ENCODE measurements at regions of chr9 and their contacts with region 1.

Region 1: DNA sequence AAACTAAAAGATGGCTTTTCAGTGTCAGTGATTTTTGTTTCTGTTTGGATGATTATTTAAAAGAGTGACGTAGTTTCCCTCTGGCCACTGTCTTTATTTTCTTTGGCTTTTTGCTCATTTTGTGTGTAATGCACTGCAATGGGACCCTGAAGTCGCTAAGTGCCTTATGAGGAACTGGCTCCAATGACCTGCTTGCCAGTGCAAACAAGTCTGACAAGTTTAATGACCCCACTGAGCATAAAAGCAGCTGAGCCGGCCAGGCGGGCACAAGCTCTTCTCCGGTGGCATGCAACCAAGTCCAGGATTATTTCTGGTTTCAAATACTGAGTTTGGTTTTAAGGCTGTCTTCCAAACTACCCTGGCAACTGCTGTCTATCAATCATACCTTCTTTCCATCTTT is 15.6 kb upstream of the GNA14 start:
- DNase-seq: peak; percentile 50
- H3K4me3 ChIP-seq: no peak overlapping the region
- H3K27ac ChIP-seq: no peak overlapping the region
- H3K4me1 ChIP-seq: peaks cover 4% of the 10 kb centered on the region
- H3K27me3 ChIP-seq: no peaks in the 10 kb centered on the region
- CTCF ChIP-seq: no peak

Region 2: GRCh38 chr9:76018235-76018634 is 1645.5 kb before region 1 on chr9:
- intact Hi-C with region 1: no loop called
- DNase-seq: peak; percentile 36
- H3K4me3 ChIP-seq: no peak overlapping the region
- H3K27ac ChIP-seq: no peak overlapping the region
- H3K4me1 ChIP-seq: no peaks in the 10 kb centered on the region
- H3K27me3 ChIP-seq: no peaks in the 10 kb centered on the region
- CTCF ChIP-seq: no peak

Region 3: DNA sequence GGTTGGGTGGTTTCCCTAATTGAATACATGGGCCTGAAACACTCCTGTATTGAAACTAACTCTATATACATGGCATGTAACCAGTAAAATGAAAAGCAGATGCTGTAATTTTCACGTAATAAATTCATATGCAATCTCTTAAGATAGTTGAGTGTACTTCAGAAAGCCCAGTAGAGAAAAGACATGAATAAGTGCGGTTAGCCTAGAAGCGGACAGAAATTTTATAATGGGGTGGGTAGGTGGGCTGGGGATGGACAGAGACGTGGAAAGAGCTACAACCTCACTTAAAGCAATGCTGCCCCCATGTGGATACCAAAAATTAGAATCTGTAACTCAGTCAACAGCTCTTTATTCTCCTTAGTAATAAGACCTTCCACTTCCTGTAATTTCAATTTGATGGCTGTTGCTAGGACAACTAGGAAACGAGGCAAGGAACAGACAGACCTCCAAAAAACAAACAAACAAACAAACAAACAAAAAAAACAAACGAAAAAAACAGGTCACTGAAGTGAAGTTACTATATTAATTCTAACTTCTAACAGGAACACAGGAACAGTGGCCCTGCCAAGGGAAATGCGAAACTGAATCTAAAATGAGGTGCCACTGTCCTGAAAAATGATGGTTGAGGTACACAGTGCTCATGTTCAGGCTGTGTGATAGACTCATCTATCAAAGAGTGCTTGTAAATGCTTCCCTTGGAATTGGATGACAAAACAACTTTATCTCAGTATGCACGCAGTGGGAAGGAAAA is 87.8 kb after region 1 on chr9:
- intact Hi-C with region 1: loop called (anchors 5 kb)
- DNase-seq: peak; percentile 57
- H3K4me3 ChIP-seq: no peak overlapping the region
- H3K27ac ChIP-seq: no peak overlapping the region
- H3K4me1 ChIP-seq: no peaks in the 10 kb centered on the region
- H3K27me3 ChIP-seq: no peaks in the 10 kb centered on the region
- CTCF ChIP-seq: peak; percentile 41

Region 4: DNA sequence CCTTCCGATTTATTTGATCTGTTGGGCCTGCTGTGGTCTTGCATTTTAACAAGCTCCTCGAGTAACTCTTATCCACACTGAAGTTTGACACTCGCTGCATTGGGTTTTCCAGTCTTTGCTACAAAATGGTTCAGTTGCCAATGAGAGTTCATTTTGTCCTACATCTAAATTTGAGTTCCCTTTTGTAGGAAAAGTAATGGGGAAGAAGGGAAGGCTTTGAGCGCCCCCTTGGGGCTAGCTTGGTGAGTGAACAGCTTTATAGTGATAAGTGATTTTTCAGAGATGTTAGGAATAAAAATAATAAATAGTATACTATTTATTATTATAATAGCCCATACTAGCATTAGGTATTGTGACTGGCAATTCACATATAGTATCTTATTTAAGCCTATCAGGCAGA is 457.7 kb after region 1 on chr9:
- intact Hi-C with region 1: loop called (anchors 10 kb)
- DNase-seq: peak; percentile 85
- H3K4me3 ChIP-seq: no peak overlapping the region
- H3K27ac ChIP-seq: no peak overlapping the region
- H3K4me1 ChIP-seq: peaks cover 5% of the 10 kb centered on the region
- H3K27me3 ChIP-seq: no peaks in the 10 kb centered on the region
- CTCF ChIP-seq: peak; percentile 71

Measured in colonic mucosa (tissue), 4 donors.